Posterior vena cava (tissue), 2 donors: ENCODE measurements at regions of chr1 and their contacts with region 1.

Region 1: DNA sequence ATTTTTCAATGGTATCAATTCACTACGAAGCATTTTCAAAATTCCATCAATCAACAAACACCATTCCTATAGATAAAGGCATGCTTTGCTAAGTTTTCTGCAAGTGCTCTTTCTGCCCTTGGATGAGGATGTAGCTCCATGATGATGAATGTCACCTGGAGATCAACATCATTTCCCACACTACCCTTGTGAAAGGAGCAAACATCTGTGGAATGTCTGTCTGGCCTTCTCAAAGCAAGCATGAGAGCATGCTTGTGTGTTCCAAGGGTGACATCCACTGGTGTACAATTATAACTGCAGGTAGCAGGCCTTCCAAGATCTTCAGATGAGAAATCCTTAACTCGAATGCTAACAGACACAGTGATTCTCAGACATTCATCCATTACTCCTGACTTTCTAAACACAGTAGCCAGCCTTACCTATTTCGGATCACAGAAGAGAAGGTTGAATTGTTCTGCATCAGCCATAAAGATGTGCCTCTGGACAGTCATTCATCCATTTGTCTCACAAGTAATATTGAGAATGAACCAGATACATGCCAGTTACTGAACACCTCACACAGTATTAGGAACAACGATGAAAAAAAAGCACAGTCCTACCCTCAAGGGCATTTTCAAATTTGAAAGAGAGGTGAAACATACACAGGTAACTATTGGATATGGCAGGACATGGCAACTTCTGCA is 162.4 kb downstream of the TPR start:
- DNase-seq: no peak

Region 2: DNA sequence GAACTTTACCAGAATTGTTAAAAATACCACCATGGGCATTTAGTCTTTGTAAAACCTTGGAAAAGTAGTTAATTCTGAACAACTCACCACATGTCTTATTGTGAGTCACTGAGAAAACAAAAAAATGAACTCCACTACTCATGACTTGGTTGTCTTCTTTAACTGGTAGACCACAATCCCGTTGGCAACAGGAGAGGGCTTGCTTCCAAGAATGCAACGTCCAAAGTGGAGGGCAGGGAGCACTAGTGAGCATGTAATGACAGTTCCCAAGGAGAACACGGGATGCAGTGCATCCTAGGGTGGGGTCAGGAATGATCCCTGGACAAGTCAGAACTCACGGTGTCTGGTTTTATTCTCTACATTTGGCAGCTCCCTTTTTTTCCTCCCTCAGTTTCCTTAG is 493.7 kb before region 1 on chr1:
- intact Hi-C with region 1: loop called in 1 of 2 experiments (anchors 10 kb)
- DNase-seq: peak; percentile 86

Region 3: GRCh38 chr1:185813401-185813979 is 399.2 kb before region 1 on chr1:
- intact Hi-C with region 1: loop called (anchors 5 to 10 kb)
- DNase-seq: no peak